Activated CD4-positive, alpha-beta memory T cell treated with anti-CD3 and anti-CD28 coated beads, Interleukin-2, amount 10 ng/mL, durations not matched to agents 7 days and 5 days (primary cell): ENCODE measurements at regions of chr1 and their contacts with region 1.

Region 1: GRCh38 chr1:156226116-156226538 is 13.3 kb downstream of the PMF1 start:
- DNase-seq: no peak
- H3K4me3 Mint-ChIP-seq: no peak overlapping the region
- H3K27ac Mint-ChIP-seq: peak overlapping the region; percentile 84
- H3K4me1 Mint-ChIP-seq: peaks cover 58% of the 10 kb centered on the region
- H3K27me3 Mint-ChIP-seq: no peaks in the 10 kb centered on the region

Region 2: DNA sequence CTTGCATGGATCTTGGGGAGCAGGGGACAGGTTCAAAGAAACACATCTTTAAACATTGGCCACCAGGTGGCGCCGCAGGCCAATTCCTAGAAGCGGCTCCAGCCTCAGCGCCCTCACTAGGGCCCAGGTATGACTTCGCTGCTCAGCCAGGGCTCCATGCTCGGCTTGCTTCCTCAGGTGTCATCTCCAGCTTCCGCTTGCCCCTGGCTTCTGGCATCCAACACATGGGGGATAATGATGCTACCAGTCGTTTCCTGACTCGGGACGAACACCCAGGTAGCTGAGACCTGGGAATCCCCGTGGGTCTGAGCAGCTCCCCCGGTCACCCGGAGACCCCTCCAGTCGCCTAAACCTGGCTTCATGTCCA is 135.3 kb before region 1 on chr1:
- CTCF ChIA-PET with region 1: interaction called, 11 read pairs
- POLR2A ChIA-PET with region 1: interaction called, 17 read pairs
- DNase-seq: peak; percentile 91
- H3K4me3 Mint-ChIP-seq: no peak overlapping the region
- H3K27ac Mint-ChIP-seq: no peak overlapping the region
- H3K4me1 Mint-ChIP-seq: peaks cover 12% of the 10 kb centered on the region
- H3K27me3 Mint-ChIP-seq: peaks cover 21% of the 10 kb centered on the region

Region 3: DNA sequence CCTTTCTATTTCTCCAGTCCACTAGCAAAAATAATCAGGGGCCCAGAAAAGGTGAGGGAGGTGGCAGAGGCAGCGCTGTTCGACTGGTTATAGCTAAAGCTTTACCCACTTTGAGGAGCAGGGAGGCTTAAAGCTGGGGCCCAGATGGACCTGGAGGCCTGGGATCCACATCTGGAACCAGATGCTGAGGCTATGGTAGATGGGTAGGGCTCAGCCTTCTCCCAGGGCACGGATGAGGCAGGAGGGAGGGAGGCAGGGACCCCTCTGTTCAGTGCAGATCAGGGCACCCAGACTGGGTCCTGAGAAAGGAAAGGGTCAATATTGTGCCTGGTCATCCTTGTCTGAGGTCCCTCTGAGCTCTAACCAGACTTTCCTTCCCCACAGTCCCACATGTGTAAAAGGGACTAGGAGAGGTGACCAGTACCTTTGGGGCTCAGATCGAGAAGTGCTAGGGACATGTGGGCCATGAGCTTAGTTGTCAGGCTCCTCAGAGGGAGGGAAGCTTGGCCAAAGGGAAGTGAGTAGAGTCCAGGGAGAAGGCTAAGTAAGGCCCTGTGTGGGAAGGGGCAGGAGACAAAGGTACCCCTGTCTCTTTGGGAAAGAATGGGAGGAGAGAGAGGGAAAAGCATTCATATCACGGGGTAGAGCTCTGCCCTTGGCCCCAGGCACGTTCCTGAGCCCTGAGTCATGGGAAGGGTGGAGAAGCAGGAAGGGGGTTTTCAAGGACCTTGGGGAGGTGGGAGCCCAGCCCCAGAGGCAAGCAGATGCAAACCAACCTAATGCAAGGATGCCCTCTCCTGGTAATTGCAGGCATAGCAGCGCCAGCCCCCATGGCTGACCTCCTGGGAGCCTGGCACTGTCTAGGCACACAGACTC is 96.2 kb before region 1 on chr1:
- CTCF ChIA-PET with region 1: interaction called, 47 read pairs
- POLR2A ChIA-PET with region 1: interaction called, 8 read pairs
- DNase-seq: peak; percentile 83
- H3K4me3 Mint-ChIP-seq: no peak overlapping the region
- H3K27ac Mint-ChIP-seq: no peak overlapping the region
- H3K4me1 Mint-ChIP-seq: peaks cover 53% of the 10 kb centered on the region
- H3K27me3 Mint-ChIP-seq: no peaks in the 10 kb centered on the region

Region 4: GRCh38 chr1:156160743-156161171 is 65.4 kb before region 1 on chr1:
- CTCF ChIA-PET with region 1: interaction called, 19 read pairs
- POLR2A ChIA-PET with region 1: interaction called, 9 read pairs
- DNase-seq: peak; percentile 73
- H3K4me3 Mint-ChIP-seq: peak overlapping the region; percentile 56
- H3K27ac Mint-ChIP-seq: peak overlapping the region; percentile 66
- H3K4me1 Mint-ChIP-seq: peaks cover 64% of the 10 kb centered on the region
- H3K27me3 Mint-ChIP-seq: no peaks in the 10 kb centered on the region

Region 5: GRCh38 chr1:156198831-156199349 is 27.2 kb before region 1 on chr1:
- CTCF ChIA-PET with region 1: interaction called, 41 read pairs
- POLR2A ChIA-PET with region 1: interaction called, 27 read pairs
- DNase-seq: peak; percentile 42
- H3K4me3 Mint-ChIP-seq: peak overlapping the region; percentile 30
- H3K27ac Mint-ChIP-seq: peak overlapping the region; percentile 84
- H3K4me1 Mint-ChIP-seq: peaks cover 63% of the 10 kb centered on the region
- H3K27me3 Mint-ChIP-seq: no peaks in the 10 kb centered on the region

Region 6: DNA sequence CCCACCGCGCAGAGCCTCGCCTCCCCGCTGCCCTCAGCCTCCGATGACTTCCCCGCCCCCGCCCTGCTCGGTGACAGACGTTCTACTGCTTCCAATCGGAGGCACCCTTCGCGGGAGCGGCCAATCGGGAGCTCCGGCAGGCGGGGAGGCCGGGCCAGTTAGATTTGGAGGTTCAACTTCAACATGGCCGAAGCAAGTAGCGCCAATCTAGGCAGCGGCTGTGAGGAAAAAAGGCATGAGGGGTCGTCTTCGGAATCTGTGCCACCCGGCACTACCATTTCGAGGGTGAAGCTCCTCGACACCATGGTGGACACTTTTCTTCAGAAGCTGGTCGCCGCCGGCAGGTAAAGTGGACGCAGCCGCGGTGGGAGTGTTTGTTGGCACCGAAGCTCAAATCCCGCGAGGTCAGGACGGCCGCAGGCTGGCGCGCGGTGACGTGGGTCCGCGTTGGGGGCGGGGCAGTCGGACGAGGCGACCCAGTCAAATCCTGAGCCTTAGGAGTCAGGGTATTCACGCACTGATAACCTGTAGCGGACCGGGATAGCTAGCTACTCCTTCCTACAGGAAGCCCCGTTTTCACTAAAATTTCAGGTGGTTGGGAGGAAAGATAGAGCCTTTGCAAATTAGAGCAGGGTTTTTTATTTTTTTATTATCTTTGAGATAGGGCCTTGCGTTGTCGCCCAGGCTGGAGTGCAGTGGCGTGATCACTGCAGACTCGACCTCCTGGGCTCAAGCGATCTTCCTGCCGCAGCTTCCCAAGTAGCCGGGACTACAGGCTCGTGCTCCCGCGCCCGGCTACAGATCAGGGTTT is 13.1 kb before region 1 on chr1 and contains the start of gene PMF1:
- CTCF ChIA-PET with region 1: interaction called, 68 read pairs
- POLR2A ChIA-PET with region 1: interaction called, 119 read pairs
- DNase-seq: peak; percentile 97
- H3K4me3 Mint-ChIP-seq: peak within 1 kb of the TSS; percentile 87
- H3K27ac Mint-ChIP-seq: peak within 1 kb of the TSS; percentile 94
- H3K4me1 Mint-ChIP-seq: peaks cover 46% of the 10 kb centered on the region
- H3K27me3 Mint-ChIP-seq: no peaks in the 10 kb centered on the region
- total RNA-seq, gene PMF1: 65.5 to 67.7 TPM

Region 7: GRCh38 chr1:156295391-156295947 is 69.3 kb after region 1 on chr1 and contains the start of gene GLMP:
- CTCF ChIA-PET with region 1: no interaction called
- POLR2A ChIA-PET with region 1: no interaction called
- DNase-seq: peak; percentile 74
- H3K4me3 Mint-ChIP-seq: peak within 1 kb of the TSS; percentile 88
- H3K27ac Mint-ChIP-seq: peak within 1 kb of the TSS; percentile 77
- H3K4me1 Mint-ChIP-seq: peaks cover 19% of the 10 kb centered on the region
- H3K27me3 Mint-ChIP-seq: no peaks in the 10 kb centered on the region
- total RNA-seq, gene GLMP: 36.8 to 39.4 TPM

Region 8: GRCh38 chr1:156310962-156311361 is 84.8 kb after region 1 on chr1:
- CTCF ChIA-PET with region 1: no interaction called
- POLR2A ChIA-PET with region 1: no interaction called
- DNase-seq: no peak
- H3K4me3 Mint-ChIP-seq: no peak overlapping the region
- H3K27ac Mint-ChIP-seq: no peak overlapping the region
- H3K4me1 Mint-ChIP-seq: no peaks in the 10 kb centered on the region
- H3K27me3 Mint-ChIP-seq: no peaks in the 10 kb centered on the region